GM23248 (cell line): ENCODE measurements at regions of chr6 and their contacts with region 1.

Region 1: GRCh38 chr6:12233693-12234571 is 56.2 kb upstream of the EDN1 start:
- DNase-seq: peak; percentile 84
- H3K4me3 ChIP-seq: no peak overlapping the region
- H3K27ac ChIP-seq: no peak overlapping the region
- H3K4me1 ChIP-seq: peaks cover 18% of the 10 kb centered on the region
- H3K27me3 ChIP-seq: no peaks in the 10 kb centered on the region

Region 2: DNA sequence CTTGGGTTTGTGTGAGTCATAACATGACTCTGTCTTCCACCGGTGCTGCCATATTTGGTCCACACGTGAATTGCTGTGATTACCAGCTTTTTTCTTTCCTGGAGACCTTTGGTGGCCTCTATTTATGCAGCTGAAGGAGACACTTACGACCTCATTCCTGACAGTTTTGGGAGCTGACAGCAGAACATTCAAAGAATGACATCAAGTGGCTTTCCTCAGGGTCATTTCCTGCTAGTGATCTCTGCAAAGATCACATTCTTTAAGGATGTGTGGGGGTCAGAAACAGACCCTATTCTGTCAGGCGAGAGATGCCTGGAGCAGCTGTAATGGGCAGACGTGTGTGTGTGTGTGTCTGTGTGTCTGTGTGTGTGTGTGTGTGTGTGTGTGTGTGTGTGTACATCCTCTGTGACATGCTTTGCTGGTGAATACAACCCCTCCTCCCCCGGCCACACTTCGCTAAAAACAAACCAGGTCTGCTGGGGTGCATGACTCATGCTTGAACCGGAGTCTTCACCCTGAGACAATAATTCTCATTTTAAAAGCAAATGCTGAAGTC is 580.8 kb before region 1 on chr6:
- in situ Hi-C with region 1: loop called (anchors 25 kb)
- DNase-seq: peak; percentile 89
- H3K4me3 ChIP-seq: no peak overlapping the region
- H3K27ac ChIP-seq: peak overlapping the region; percentile 61
- H3K4me1 ChIP-seq: peaks cover 53% of the 10 kb centered on the region
- H3K27me3 ChIP-seq: no peaks in the 10 kb centered on the region

Region 3: DNA sequence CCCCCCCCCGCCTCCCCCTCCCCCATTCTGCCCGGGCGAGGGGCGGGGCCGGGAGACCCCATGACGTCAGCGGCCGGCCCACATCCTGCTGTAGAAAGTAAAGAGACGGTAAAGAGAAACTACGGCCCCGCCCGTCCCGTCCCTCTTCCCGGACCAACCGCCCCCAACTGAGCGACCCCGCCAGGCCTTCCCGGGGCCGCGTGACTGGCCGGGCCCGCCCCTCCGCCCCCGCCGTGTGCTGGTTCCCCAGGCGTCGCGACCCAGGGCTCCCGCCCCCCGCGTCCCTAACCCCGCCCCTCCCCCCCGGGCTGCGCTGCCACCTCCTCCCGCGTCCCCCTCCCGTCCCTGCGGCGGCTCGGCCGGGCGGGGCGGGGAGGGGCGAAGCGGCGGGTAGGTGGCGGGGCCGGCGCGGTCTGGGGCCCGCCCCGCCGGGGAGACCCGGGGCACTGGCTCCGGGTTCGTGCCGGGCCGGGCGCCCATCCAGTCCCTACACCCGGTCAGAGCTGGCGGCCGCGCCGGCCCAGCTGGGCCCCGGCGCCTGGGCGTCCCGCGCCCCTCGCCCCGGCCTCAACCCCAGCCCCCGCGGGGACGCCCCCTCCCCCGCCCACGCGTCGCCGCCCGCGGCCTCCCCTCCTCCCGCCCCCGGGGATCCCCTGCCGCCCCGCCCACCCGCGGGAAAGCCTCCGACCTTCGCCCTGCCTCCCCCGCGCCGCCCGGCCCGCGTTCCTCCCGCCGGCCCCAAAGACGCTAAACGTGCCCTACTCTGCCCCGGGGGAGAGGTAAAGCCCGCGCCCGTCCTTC is 222.5 kb before region 1 on chr6:
- in situ Hi-C with region 1: no loop called
- DNase-seq: peak; percentile 99
- H3K4me3 ChIP-seq: peak overlapping the region; percentile 80
- H3K27ac ChIP-seq: peak overlapping the region; percentile 95
- H3K4me1 ChIP-seq: peaks cover 26% of the 10 kb centered on the region
- H3K27me3 ChIP-seq: no peaks in the 10 kb centered on the region